IMR-90 (cell line): ENCODE measurements at regions of chr14 and their contacts with region 1.

Region 1: GRCh38 chr14:31787381-31787780 is 226.2 kb downstream of the NUBPL start:
- DNase-seq: peak; percentile 11
- ATAC-seq: no peak
- H3K4me3 ChIP-seq: no peak overlapping the region
- H3K27ac ChIP-seq: no peak overlapping the region
- H3K4me1 ChIP-seq: no peaks in the 10 kb centered on the region
- H3K27me3 ChIP-seq: no peaks in the 10 kb centered on the region
- CTCF ChIP-seq: no peak; the same call in 1 of the 2 replicates
- POLR2A ChIP-seq: no peak
- RAD21 ChIP-seq: no peak

Region 2: GRCh38 chr14:31752867-31753661 is 34.3 kb before region 1 on chr14:
- CTCF ChIA-PET with region 1: no interaction called
- POLR2A ChIA-PET with region 1: no interaction called
- dilution Hi-C with region 1: no loop called
- in situ Hi-C with region 1: no loop called
- intact Hi-C with region 1: no loop called
- DNase-seq: no peak
- ATAC-seq: no peak
- H3K4me3 ChIP-seq: no peak overlapping the region
- H3K27ac ChIP-seq: no peak overlapping the region
- H3K4me1 ChIP-seq: no peaks in the 10 kb centered on the region
- H3K27me3 ChIP-seq: no peaks in the 10 kb centered on the region
- CTCF ChIP-seq: no peak
- POLR2A ChIP-seq: no peak
- RAD21 ChIP-seq: no peak

Region 3: DNA sequence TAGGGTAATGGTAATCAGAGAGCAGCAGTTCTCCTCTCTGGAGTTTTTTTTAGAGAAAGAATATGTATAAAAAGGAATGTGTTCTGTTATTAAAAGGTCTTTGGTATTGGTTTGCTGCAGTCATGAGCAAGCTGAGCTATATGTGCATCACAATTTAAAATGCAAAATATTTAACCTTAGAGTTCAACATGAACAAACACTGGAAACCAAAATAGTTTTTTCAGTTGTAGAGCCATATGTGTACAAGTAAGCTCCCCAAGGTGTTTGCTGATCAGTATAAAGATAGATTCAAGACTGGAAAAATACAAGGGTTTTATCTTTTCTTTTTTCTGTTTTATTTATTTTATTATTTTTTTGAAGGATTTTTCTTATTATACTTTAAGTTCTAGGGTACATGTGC is 18.9 kb after region 1 on chr14:
- CTCF ChIA-PET with region 1: no interaction called
- POLR2A ChIA-PET with region 1: no interaction called
- dilution Hi-C with region 1: no loop called
- in situ Hi-C with region 1: no loop called
- intact Hi-C with region 1: loop called (anchors 2 kb)
- DNase-seq: peak; percentile 37
- ATAC-seq: peak; percentile 81
- H3K4me3 ChIP-seq: no peak overlapping the region
- H3K27ac ChIP-seq: no peak overlapping the region
- H3K4me1 ChIP-seq: no peaks in the 10 kb centered on the region
- H3K27me3 ChIP-seq: no peaks in the 10 kb centered on the region
- CTCF ChIP-seq: no peak
- POLR2A ChIP-seq: no peak
- RAD21 ChIP-seq: no peak